ENCODE measurements at regions of chrX and their contacts with region 1.

Region 1: GRCh38 chrX:48475774-48476577 is at the start of gene FTSJ1:
- DNase-seq: peak; percentile 73 to 95
- ATAC-seq: peak; percentile 91 to 95 (median 93)
- H3K4me3 ChIP-seq: peak within 1 kb of the TSS; percentile 88
- H3K4me3 Mint-ChIP-seq: peak within 1 kb of the TSS; percentile 81
- H3K27ac ChIP-seq: peak within 1 kb of the TSS; percentile 81
- H3K27ac Mint-ChIP-seq: peak within 1 kb of the TSS; percentile 85 to 96
- H3K4me1 ChIP-seq: peaks cover 18% of the 10 kb centered on the region
- H3K4me1 Mint-ChIP-seq: peaks cover 14 to 48% of the 10 kb centered on the region in 2 donors
- H3K27me3 ChIP-seq: no peaks in the 10 kb centered on the region
- H3K27me3 Mint-ChIP-seq: no peaks in the 10 kb centered on the region
- CTCF ChIP-seq: no peak
- total RNA-seq, gene FTSJ1: 62.4 to 75.3 (median 67.3) TPM

Region 2: DNA sequence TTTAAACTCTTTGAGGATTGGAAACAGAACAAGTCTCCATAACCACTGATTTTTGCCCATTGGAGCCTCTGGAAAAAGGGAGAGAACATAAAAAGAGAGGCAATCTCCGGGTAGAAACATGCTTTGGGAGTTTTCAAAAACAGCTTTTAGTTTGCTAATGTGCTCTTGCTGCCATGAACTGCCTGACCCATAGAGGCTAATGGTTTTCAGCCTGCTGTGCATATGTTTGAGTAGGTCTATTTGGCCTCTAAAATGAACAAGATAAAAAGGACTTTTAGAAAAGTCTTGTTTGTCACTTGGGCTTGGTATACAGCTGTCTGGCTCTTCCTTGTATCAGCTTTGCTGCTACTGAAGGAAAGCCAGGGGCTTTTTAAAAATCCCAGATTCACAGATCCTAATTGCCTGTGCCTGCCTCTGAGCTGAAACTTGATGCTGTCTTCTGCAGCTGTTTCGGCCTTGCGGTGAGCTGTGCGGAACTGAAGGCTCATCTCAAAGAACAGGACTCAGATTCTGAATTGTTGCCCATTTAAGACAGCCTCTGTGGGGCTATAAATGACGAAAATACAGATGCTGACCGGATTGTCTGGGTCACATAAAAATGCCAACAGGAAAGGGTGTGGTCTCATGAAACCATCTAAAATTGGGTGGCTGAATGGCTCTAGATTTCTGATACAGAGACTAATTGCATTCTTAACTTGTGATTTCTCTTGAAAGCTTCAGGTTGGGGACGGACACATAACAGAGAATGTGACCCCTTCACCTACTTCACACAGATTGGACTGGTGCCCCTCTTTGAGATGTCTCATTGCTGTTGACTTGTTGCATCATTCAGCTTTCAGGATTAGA is 974.5 kb before region 1 on chrX:
- intact Hi-C with region 1: no loop called
- DNase-seq: no peak
- ATAC-seq: no peak
- H3K4me3 ChIP-seq: no peak overlapping the region
- H3K4me3 Mint-ChIP-seq: no peak overlapping the region
- H3K27ac ChIP-seq: no peak overlapping the region
- H3K27ac Mint-ChIP-seq: no peak overlapping the region
- H3K4me1 ChIP-seq: peaks cover 3% of the 10 kb centered on the region
- H3K4me1 Mint-ChIP-seq: peaks cover 0 to 5% of the 10 kb centered on the region in 2 donors
- H3K27me3 ChIP-seq: no peaks in the 10 kb centered on the region
- H3K27me3 Mint-ChIP-seq: peaks cover 0 to 27% of the 10 kb centered on the region in 2 donors
- CTCF ChIP-seq: no peak

Region 3: DNA sequence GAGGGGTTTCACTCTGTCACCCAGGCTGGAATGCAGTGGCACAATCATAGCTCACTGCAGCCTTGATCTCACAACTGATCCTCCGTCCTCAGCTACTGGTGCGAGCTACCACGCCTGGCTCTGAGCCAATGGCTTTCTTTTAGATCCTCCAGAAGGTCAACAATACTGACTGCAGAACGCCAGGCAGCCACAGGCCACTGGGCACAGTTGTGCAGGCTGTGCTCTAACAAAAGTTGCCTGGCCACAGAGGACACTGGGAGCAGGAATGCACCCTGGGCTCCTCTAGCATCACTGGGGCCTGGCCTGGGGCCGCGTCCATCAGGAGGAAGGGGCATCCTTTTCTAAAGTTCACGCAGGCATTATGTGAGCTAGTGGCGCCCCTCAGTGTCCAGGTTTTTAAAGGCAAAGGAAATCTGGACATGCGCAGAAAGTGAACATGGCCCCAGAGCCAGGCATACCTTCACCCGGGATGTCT is 18.0 kb after region 1 on chrX:
- intact Hi-C with region 1: no loop called
- DNase-seq: peak in 1 of 2 donors; percentile 9
- ATAC-seq: no peak
- H3K4me3 ChIP-seq: no peak overlapping the region
- H3K4me3 Mint-ChIP-seq: no peak overlapping the region
- H3K27ac ChIP-seq: no peak overlapping the region
- H3K27ac Mint-ChIP-seq: no peak overlapping the region
- H3K4me1 ChIP-seq: peaks cover under 1% of the 10 kb centered on the region
- H3K4me1 Mint-ChIP-seq: peaks cover 0 to under 1% of the 10 kb centered on the region in 2 donors
- H3K27me3 ChIP-seq: no peaks in the 10 kb centered on the region
- H3K27me3 Mint-ChIP-seq: no peaks in the 10 kb centered on the region
- CTCF ChIP-seq: no peak

Region 4: GRCh38 chrX:48521353-48522243 is 45.6 kb after region 1 on chrX and contains the start of gene EBP:
- intact Hi-C with region 1: loop called (anchors 5 kb)
- DNase-seq: peak; percentile 86 to 96
- ATAC-seq: peak; percentile 95 to 99 (median 95)
- H3K4me3 ChIP-seq: peak within 1 kb of the TSS; percentile 66
- H3K4me3 Mint-ChIP-seq: peak within 1 kb of the TSS; percentile 88
- H3K27ac ChIP-seq: peak within 1 kb of the TSS; percentile 90
- H3K27ac Mint-ChIP-seq: peak within 1 kb of the TSS; percentile 86 to 92
- H3K4me1 ChIP-seq: peaks cover 28% of the 10 kb centered on the region
- H3K4me1 Mint-ChIP-seq: peaks cover 14 to 22% of the 10 kb centered on the region in 2 donors
- H3K27me3 ChIP-seq: no peaks in the 10 kb centered on the region
- H3K27me3 Mint-ChIP-seq: no peaks in the 10 kb centered on the region
- CTCF ChIP-seq: no peak
- total RNA-seq, gene EBP: 91.6 to 115 (median 97.6) TPM

Region 5: GRCh38 chrX:48539345-48540027 is 63.5 kb after region 1 on chrX and contains the start of gene TBC1D25:
- intact Hi-C with region 1: loop called (anchors 1 kb)
- DNase-seq: peak; percentile 91 to 97
- ATAC-seq: peak; percentile 83 to 96 (median 87)
- H3K4me3 ChIP-seq: peak within 1 kb of the TSS; percentile 92
- H3K4me3 Mint-ChIP-seq: peak within 1 kb of the TSS; percentile 80
- H3K27ac ChIP-seq: peak within 1 kb of the TSS; percentile 100
- H3K27ac Mint-ChIP-seq: peak within 1 kb of the TSS; percentile 77 to 94
- H3K4me1 ChIP-seq: peaks cover 21% of the 10 kb centered on the region
- H3K4me1 Mint-ChIP-seq: peaks cover 17 to 29% of the 10 kb centered on the region in 2 donors
- H3K27me3 ChIP-seq: no peaks in the 10 kb centered on the region
- H3K27me3 Mint-ChIP-seq: no peaks in the 10 kb centered on the region
- CTCF ChIP-seq: peak; percentile 33
- total RNA-seq, gene TBC1D25: 34.9 to 41.8 (median 36.1) TPM

Measured in natural killer cell (primary cell).